Head of caudate nucleus (tissue), 42 donors: ENCODE measurements at regions of chr10 and their contacts with region 1.

Region 1: DNA sequence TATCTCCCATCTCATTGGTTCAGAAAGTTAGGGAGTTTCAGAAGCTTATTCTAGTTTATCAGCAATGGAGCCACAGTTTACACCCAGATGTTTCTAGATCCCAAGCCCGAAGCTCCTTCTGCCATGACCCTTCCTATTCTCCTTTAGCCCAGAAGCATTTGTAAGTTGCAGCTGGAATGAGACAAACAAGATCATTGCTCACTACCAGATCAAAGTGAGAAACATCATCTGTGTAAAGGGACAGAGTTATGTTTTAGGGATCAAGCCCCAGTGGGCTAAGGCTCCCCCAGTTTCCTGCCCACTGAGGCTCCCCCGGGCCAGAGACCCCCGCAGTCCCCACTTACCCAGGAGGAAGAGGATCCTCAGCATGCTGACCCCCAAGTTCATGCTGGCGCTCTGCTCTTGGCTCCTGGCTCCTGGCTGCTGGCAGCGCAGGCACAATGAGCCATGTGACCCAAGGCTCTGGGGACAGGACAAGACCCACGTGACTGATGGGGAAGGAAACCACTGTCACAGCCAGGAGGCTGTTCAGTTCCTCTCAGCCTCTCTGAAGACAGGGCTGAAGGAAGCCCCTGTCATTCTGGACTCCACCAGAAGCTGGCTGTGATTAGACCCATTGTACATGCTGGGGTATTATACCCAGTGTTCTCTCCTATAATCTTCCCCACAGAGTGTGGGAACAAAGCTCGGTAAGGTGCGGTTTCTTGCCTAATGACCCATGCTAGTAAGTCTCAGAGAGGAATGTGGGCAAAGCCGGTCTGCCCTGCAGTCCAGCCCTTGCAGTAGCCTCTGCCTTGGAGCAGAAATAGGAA is at the start of gene TMEM273:
- DNase-seq: peak; percentile 56 to 95 (median 87)

Region 2: GRCh38 chr10:49109669-49110340 is 78.4 kb before region 1 on chr10:
- intact Hi-C with region 1: loop called (anchors 10 kb)
- DNase-seq: peak in 9 of 42 donors; percentile 21 to 58 (median 38)

Region 3: GRCh38 chr10:49679480-49679893 is 491.3 kb after region 1 on chr10 and contains the start of gene C10orf53:
- intact Hi-C with region 1: no loop called
- DNase-seq: peak in 40 of 42 donors; percentile 12 to 77 (median 54)